Cardiac septum (tissue), 1 donor: ENCODE measurements at regions of chr7 and their contacts with region 1.

Region 1: DNA sequence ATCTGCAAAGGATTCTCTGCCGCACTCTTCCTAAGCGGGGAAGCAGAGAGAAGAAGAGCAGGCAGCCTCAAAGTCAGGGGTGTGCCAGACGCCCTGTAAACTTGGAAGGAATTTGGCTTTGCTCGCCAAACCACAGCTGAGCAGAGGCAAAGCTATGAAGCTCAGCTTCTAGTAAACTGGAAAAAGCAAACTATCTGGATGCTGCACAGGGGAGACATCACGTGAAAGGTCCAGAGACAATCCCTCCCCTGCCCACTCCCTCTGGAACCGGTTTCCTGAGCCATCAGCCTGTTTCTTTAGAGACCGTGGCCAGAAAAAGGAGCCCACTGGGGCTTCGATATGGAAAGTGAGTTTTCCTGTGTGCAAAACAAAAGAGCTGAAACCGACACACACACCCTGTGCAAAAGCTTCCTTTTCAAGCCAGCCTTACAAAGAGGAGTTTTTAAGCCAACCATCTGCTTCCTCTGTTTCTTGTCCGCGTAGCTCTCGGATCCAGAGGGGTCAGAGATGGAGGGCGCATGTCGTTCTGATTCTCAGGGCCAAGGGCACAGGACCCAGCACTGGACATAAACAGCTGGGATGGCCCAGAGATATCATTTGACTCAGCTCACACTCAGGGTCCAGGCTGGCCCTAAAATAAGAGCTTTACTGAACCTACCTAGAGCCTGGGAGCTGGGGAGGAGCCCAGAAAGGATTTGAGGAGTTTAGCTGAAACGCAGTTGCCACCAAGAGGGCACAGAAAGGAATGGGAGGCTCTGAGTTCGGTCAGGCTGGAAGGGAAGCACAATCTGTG is 58.2 kb upstream of the DNAAF5 start:
- DNase-seq: peak; percentile 49

Region 2: GRCh38 chr7:726084-726853 is 57.9 kb after region 1 on chr7 and contains the start of gene DNAAF5:
- intact Hi-C with region 1: loop called (anchors 5 kb)
- DNase-seq: peak; percentile 92
- total RNA-seq, gene DNAAF5: 22.1 TPM

Region 3: GRCh38 chr7:774161-775109 is 106.1 kb after region 1 on chr7:
- intact Hi-C with region 1: loop called (anchors 5 kb)
- DNase-seq: no peak

Region 4: DNA sequence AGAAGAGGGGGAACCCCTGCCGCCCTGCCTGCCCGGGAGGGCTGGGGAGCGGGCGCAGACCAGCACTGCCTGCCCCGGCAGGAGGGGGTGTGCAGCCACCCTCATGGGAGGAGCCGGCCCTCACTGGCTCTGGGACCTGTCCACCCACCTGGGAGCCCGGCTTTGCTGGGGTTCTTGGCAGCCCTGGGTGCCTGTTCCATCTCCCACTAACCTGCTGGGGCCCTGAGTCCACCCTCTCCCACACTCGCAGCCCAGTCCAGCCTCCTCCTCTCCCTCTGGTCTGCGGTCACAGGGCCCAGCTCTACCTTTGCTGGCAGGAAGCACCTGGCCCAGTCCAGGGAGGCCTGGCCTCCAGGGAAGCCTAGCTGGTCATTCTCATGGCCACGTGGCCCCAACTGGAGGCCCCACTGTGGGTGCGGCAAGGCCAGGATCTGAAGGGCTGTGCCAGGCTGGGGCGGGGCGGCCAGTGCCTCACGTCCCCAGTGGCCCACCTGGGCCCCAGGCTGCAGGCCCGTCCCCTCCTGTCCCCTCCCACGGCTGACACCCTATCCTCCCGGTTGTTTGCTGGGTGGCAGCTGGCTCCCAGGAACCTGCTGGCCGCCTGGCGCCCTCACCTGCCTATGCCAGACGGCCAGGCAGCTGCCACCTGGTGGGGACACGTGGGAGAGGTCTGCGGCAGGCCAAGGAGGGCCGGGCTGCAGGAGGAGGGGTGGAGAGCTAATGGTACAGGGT is 887.6 kb after region 1 on chr7 and contains the start of gene TMEM184A:
- intact Hi-C with region 1: no loop called
- DNase-seq: no peak
- total RNA-seq, gene TMEM184A: 0.08 TPM